Endothelial cell of umbilical vein (primary cell): ENCODE measurements at regions of chr9 and their contacts with region 1.

Region 1: DNA sequence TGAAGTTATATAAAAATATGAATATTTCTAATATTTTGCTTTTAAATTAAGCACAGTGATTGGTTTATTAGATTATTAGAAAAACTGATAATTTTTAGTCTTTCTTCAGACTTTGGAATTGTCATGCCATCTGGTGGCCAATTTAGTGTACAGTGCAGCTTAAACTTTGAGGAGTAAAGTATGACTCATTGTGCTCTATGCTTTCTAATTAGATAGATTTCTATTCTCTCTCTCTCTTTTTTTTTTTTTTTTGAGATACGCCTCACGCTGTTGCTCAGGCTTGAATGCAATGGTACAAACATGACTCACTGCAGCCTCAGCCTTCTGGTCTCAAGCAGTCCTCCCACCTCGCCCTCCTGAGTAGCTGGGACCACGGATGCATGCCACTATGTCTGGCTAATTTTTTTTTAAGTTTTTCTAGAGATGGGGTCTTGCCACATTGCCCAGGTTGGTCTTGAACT is 42.1 kb upstream of the GPR21 start:
- DNase-seq: peak; percentile 92
- H3K4me3 ChIP-seq: no peak overlapping the region
- H3K27ac ChIP-seq: no peak overlapping the region
- H3K4me1 ChIP-seq: peaks cover 2% of the 10 kb centered on the region
- H3K27me3 ChIP-seq: no peaks in the 10 kb centered on the region
- CTCF ChIP-seq: peak; percentile 39 to 46
- POLR2A ChIP-seq: no peak

Region 2: DNA sequence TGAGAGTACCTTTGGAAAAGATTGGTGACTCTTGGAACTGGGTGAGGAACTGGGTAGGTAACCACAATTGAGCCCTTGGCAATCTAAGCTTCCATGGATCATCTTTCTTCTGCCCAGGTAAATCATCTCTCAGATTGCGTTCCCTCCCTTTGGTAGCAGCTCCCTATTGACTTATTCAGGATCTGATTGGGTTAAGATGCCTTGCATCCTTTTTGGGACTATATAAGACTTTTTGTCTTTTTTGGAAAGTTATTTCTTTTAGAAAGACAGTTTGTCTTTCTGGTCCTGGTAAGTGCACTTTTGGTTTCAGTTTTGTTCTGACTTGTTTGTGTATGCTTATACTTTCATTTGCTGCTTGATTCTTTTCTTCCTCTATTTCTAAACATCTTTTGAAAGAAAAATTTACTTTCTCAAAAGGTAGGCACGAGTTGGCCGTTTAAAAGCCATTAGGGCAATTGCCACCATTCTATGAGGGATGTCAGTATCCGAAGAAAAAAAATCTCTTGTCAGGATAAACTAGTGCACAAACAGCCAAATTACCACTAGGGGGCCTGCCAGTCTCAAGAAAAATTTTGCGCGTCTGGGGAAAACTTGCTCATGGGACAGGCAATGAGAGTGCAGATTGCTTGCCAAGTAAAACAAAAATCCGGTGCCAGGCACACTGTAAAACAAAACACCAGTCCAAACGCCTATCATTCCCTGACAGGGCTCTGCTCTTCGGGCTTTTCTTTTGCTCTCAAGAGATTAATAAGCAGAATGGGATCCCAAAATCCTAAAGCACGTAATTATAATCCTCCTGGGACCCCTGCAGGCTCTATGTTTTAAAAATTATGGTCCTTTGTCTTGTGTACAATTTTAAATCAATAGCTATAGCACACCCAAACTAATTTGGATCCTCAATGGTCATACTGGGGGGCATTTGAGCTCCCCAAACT is 526.5 kb before region 1 on chr9:
- CTCF ChIA-PET with region 1: interaction called, 21 read pairs
- POLR2A ChIA-PET with region 1: no interaction called
- dilution Hi-C with region 1: no loop called
- intact Hi-C with region 1: loop called (anchors 1 kb)
- DNase-seq: peak; percentile 96
- H3K4me3 ChIP-seq: peak overlapping the region; percentile 24 to 96 (median 89)
- H3K27ac ChIP-seq: peak overlapping the region; percentile 26
- H3K4me1 ChIP-seq: peaks cover 7% of the 10 kb centered on the region
- H3K27me3 ChIP-seq: peaks cover 6 to 38% of the 10 kb centered on the region in 2 experiments
- CTCF ChIP-seq: peak; percentile 73 to 92
- POLR2A ChIP-seq: no peak

Region 3: GRCh38 chr9:122821278-122821943 is 170.0 kb before region 1 on chr9:
- CTCF ChIA-PET with region 1: interaction called, 6 read pairs
- POLR2A ChIA-PET with region 1: no interaction called
- dilution Hi-C with region 1: no loop called
- intact Hi-C with region 1: loop called (anchors 2 kb)
- DNase-seq: peak; percentile 98
- H3K4me3 ChIP-seq: no peak overlapping the region
- H3K27ac ChIP-seq: peak overlapping the region; percentile 97
- H3K4me1 ChIP-seq: peaks cover 66% of the 10 kb centered on the region
- H3K27me3 ChIP-seq: no peaks in the 10 kb centered on the region
- CTCF ChIP-seq: no peak
- POLR2A ChIP-seq: peak; percentile 73

Region 4: DNA sequence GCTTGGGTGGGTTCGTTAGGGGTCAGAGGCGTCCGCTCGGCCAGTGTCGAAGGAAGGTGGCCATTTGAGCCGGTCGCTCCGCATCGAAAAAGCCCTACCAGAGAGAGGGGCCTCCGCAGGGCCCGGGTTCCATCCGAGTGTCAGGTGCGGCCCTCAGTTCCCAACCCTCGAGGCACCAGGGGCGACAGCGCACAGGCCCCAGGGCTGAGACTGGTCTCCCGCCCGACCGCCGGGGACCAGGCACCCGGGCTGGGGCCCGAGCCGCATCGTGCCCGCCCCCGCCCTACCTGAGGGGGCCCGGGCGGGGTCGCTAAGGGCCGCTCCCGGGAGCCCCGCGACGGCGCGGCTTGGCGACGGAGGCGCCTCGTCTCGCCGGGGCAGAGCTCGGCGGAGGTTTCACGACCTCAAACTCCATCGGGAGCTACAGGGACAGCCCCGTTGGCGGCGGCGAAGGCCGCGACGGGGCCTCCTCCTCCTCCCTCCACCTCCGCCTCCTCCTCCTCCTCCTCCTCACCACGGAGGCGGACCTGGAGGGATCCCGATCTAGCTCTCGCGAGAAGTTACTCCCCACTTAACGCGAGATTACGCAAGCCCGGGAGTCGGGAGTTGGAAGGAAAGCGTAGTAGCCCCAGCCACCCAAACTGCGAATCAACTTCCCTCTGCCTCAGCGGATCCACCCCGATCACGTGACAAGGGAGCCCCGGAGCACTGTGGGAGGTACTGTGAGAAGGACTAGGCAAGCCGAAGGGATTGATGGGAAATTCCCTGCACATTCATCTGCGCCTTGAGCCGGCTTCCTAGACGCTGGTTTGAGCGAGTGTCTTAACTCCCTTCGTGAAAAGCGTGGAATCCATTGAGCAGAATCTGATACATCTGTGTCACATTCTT is 86.3 kb before region 1 on chr9 and contains the start of gene RC3H2:
- CTCF ChIA-PET with region 1: interaction called, 19 read pairs
- POLR2A ChIA-PET with region 1: interaction called, 4 read pairs
- dilution Hi-C with region 1: no loop called
- intact Hi-C with region 1: loop called (anchors 1 kb)
- DNase-seq: peak; percentile 100
- H3K4me3 ChIP-seq: peak within 1 kb of the TSS; percentile 53 to 92 (median 54)
- H3K27ac ChIP-seq: peak within 1 kb of the TSS; percentile 73
- H3K4me1 ChIP-seq: peaks cover 21% of the 10 kb centered on the region
- H3K27me3 ChIP-seq: no peaks in the 10 kb centered on the region
- CTCF ChIP-seq: no peak
- POLR2A ChIP-seq: peak; percentile 88
- total RNA-seq, gene RC3H2: 57.3 and 63.0 TPM in 2 replicates

Region 5: DNA sequence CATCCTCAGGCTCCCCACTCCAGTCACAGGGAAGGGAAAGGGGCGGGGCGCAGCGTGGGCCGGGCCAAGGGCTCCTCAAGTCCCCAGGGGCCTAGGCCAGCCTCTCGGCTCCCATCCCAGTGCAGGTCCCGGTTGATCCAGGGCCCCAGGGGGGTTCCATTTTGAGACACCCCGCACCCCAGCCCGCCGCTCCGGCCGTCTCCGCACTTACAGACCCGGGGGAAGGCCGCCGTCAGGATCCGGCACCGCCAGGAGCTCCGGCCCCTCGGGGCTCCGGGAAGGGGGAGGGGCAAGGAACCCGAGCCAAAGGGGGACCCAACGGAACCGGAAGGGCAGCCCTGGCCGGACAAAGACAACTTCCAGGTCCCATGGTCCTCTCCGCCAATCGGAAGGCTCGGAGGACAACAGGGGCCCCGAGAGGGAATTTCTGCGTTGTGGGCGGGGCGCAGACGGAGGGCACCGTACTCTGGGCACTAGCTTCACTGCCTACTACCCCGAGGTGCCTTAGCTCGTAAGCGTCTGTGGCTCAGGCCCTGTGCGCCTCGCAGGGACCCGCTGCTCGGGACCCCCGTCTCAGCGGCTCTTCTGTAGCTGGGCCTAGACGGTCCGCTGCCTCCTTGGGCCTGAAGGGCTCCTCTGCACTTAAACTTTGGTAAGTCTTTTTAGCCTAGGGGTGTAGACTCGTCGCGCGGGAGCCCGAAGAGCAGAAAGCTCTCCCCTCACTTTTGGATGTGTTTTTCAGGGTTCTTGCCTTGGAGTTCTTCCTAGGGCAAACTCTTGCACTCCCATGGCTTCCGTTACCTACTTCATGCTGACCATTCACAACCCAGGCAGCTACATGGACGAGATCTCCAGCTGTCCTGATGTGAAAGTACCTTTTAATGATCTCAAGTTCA is 59.9 kb before region 1 on chr9 and contains the start of gene ZBTB26:
- CTCF ChIA-PET with region 1: interaction called, 16 read pairs
- POLR2A ChIA-PET with region 1: interaction called, 3 read pairs
- dilution Hi-C with region 1: no loop called
- intact Hi-C with region 1: loop called (anchors 1 kb)
- DNase-seq: peak; percentile 95
- H3K4me3 ChIP-seq: peak within 1 kb of the TSS; percentile 64 to 100 (median 70)
- H3K27ac ChIP-seq: peak within 1 kb of the TSS; percentile 87
- H3K4me1 ChIP-seq: peaks cover 15% of the 10 kb centered on the region
- H3K27me3 ChIP-seq: no peaks in the 10 kb centered on the region
- CTCF ChIP-seq: no peak
- POLR2A ChIP-seq: peak; percentile 90
- total RNA-seq, gene ZBTB26: 4.8 and 5.0 TPM in 2 replicates

Region 6: DNA sequence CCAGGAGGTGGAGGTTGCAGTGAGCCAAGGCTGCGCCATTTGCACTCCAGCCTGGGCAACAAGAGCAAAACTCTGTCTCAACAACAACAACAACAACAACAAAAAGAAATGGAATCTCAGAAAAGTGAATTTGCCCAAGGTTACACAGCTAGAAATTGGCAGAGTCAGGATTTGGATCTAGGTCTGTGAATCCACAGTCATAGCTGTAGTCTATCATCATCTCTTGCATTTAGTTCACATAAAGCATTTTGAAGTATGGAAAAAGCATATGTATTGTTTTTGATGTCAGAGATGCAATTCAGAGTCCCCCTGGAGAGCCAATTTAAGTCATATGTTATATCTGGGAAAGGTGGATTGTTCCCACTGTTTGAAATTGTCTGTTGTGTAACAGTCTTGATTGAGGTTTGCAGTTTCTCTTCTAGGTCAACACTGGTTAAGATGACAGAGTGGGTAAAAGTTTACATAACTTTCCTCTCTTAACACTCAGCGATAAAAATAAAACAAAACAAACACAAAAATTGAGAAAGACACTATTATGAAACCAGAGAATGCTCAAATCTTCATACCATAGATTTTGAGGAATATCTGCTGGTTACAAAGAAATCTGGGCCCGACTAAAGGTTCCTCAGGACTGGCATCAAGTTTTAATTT is 20.6 kb after region 1 on chr9:
- CTCF ChIA-PET with region 1: no interaction called
- POLR2A ChIA-PET with region 1: no interaction called
- dilution Hi-C with region 1: no loop called
- intact Hi-C with region 1: no loop called
- DNase-seq: no peak
- H3K4me3 ChIP-seq: no peak overlapping the region
- H3K27ac ChIP-seq: no peak overlapping the region
- H3K4me1 ChIP-seq: no peaks in the 10 kb centered on the region
- H3K27me3 ChIP-seq: no peaks in the 10 kb centered on the region
- CTCF ChIP-seq: no peak
- POLR2A ChIP-seq: no peak

Region 7: GRCh38 chr9:123119566-123119965 is 128.2 kb after region 1 on chr9:
- CTCF ChIA-PET with region 1: no interaction called
- POLR2A ChIA-PET with region 1: no interaction called
- dilution Hi-C with region 1: no loop called
- intact Hi-C with region 1: no loop called
- DNase-seq: no peak
- H3K4me3 ChIP-seq: no peak overlapping the region
- H3K27ac ChIP-seq: no peak overlapping the region
- H3K4me1 ChIP-seq: no peaks in the 10 kb centered on the region
- H3K27me3 ChIP-seq: no peaks in the 10 kb centered on the region
- CTCF ChIP-seq: no peak
- POLR2A ChIP-seq: no peak

Region 8: DNA sequence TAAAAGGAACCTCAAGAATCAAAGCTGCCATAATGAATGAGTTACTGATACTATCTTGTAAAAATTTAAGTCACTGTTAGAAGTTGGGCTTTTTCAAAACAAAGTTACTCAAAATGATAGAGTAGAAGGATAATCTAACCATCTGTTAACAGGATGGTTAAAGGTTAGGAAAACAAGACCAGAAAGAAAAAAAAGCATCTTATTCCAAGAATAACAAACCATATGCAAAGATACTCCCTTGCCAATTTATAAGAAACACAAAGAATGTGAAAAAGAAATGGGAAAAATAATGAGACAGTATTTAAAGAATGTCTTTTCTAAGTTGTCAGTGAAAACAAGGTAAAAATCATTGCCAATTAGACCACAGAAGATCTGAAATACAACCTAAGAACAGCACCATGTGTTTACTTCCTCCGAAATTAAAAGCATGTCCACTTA is 225.8 kb after region 1 on chr9:
- CTCF ChIA-PET with region 1: no interaction called
- POLR2A ChIA-PET with region 1: no interaction called
- dilution Hi-C with region 1: no loop called
- intact Hi-C with region 1: no loop called
- DNase-seq: peak; percentile 69
- H3K4me3 ChIP-seq: peak overlapping the region in 1 of 3 experiments; percentile 21
- H3K27ac ChIP-seq: no peak overlapping the region
- H3K4me1 ChIP-seq: peaks cover 17% of the 10 kb centered on the region
- H3K27me3 ChIP-seq: no peaks in the 10 kb centered on the region
- CTCF ChIP-seq: no peak
- POLR2A ChIP-seq: no peak

Region 9: GRCh38 chr9:123541411-123541810 is 550.0 kb after region 1 on chr9:
- CTCF ChIA-PET with region 1: no interaction called
- POLR2A ChIA-PET with region 1: no interaction called
- dilution Hi-C with region 1: no loop called
- intact Hi-C with region 1: no loop called
- DNase-seq: no peak
- H3K4me3 ChIP-seq: no peak overlapping the region
- H3K27ac ChIP-seq: no peak overlapping the region
- H3K4me1 ChIP-seq: no peaks in the 10 kb centered on the region
- H3K27me3 ChIP-seq: no peaks in the 10 kb centered on the region
- CTCF ChIP-seq: no peak
- POLR2A ChIP-seq: no peak